T-cell (primary cell): ENCODE measurements at regions of chr6 and their contacts with region 1.

Region 1: GRCh38 chr6:164331026-164331425 is 916.5 kb downstream of the QKI start:
- DNase-seq: no peak
- ATAC-seq: no peak
- H3K4me3 ChIP-seq: no peak overlapping the region
- H3K4me3 Mint-ChIP-seq: no peak overlapping the region
- H3K27ac ChIP-seq: no peak overlapping the region
- H3K27ac Mint-ChIP-seq: no peak overlapping the region
- H3K4me1 ChIP-seq: no peaks in the 10 kb centered on the region
- H3K4me1 Mint-ChIP-seq: no peaks in the 10 kb centered on the region
- H3K27me3 ChIP-seq: no peaks in the 10 kb centered on the region
- H3K27me3 Mint-ChIP-seq: no peaks in the 10 kb centered on the region

Region 2: DNA sequence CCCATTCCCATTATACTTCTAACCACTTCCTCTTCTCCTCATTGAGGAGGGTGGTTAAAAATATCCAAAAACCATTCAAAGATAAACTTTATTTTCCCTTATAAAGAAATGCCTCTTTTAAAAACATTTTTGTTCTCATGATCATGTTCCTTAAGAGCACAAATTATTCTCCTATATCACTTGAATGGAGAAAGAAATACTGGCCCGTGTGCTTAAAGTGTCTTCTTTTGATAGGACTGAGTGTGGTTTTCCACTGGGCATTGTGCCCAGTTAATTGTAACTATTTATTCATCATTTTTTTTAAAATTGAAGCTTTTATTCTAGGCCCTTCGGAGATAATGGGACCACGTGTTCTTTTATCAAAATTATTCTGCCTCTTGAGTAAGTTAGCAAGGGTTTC is 45.0 kb before region 1 on chr6:
- CTCF ChIA-PET with region 1: no interaction called
- POLR2A ChIA-PET with region 1: no interaction called
- DNase-seq: no peak
- ATAC-seq: no peak
- H3K4me3 ChIP-seq: no peak overlapping the region
- H3K4me3 Mint-ChIP-seq: no peak overlapping the region
- H3K27ac ChIP-seq: no peak overlapping the region
- H3K27ac Mint-ChIP-seq: no peak overlapping the region
- H3K4me1 ChIP-seq: no peaks in the 10 kb centered on the region
- H3K4me1 Mint-ChIP-seq: no peaks in the 10 kb centered on the region
- H3K27me3 ChIP-seq: no peaks in the 10 kb centered on the region
- H3K27me3 Mint-ChIP-seq: no peaks in the 10 kb centered on the region

Region 3: GRCh38 chr6:164344801-164345291 is 13.8 kb after region 1 on chr6:
- CTCF ChIA-PET with region 1: no interaction called
- POLR2A ChIA-PET with region 1: no interaction called
- DNase-seq: no peak
- ATAC-seq: no peak
- H3K4me3 ChIP-seq: no peak overlapping the region
- H3K4me3 Mint-ChIP-seq: no peak overlapping the region
- H3K27ac ChIP-seq: no peak overlapping the region
- H3K27ac Mint-ChIP-seq: no peak overlapping the region
- H3K4me1 ChIP-seq: no peaks in the 10 kb centered on the region
- H3K4me1 Mint-ChIP-seq: no peaks in the 10 kb centered on the region
- H3K27me3 ChIP-seq: no peaks in the 10 kb centered on the region
- H3K27me3 Mint-ChIP-seq: no peaks in the 10 kb centered on the region

Region 4: DNA sequence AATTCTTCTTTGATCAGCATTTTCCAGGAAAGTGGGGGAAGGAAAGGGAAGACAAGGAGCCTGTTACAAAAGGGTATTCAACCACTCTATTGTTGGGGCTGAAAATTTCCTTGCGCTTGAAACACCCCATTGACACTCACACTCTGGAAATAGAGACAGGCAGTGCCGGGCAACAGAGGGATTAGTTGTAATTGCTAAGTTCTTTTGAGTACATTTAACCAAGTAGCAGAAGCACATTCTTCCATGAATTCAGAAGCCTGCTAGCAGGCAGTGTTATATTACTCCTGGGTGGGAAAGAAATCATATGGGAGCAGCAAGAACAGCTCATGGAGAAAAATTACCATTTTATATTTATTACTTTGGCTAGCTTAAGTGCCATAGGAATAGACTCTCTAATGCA is 232.9 kb after region 1 on chr6:
- CTCF ChIA-PET with region 1: no interaction called
- POLR2A ChIA-PET with region 1: interaction called in 1 of 2 experiments, 10 read pairs
- DNase-seq: no peak
- ATAC-seq: no peak
- H3K4me3 ChIP-seq: no peak overlapping the region
- H3K4me3 Mint-ChIP-seq: no peak overlapping the region
- H3K27ac ChIP-seq: no peak overlapping the region
- H3K27ac Mint-ChIP-seq: no peak overlapping the region
- H3K4me1 ChIP-seq: no peaks in the 10 kb centered on the region
- H3K4me1 Mint-ChIP-seq: no peaks in the 10 kb centered on the region
- H3K27me3 ChIP-seq: no peaks in the 10 kb centered on the region
- H3K27me3 Mint-ChIP-seq: no peaks in the 10 kb centered on the region

Region 5: DNA sequence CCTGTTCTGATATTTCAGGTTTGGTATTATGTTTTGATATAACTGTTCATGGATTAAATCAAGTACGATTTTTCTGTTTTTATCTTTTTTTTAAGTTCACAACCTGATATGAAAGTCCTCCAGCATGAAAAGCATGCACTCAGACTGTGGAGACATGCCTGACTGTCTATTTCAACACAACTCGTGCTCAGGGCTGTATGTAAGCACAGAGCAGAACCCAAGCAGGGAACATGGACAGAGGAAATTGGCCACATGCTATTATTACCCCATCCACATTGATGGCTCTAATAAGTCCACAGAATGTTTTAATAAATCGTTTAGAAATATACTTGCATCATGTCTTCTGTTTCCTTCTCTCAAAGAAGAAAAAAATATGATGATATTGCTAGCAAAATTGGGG is 248.0 kb after region 1 on chr6:
- CTCF ChIA-PET with region 1: no interaction called
- POLR2A ChIA-PET with region 1: no interaction called
- DNase-seq: no peak
- ATAC-seq: no peak
- H3K4me3 ChIP-seq: no peak overlapping the region
- H3K4me3 Mint-ChIP-seq: no peak overlapping the region
- H3K27ac ChIP-seq: no peak overlapping the region
- H3K27ac Mint-ChIP-seq: no peak overlapping the region
- H3K4me1 ChIP-seq: no peaks in the 10 kb centered on the region
- H3K4me1 Mint-ChIP-seq: no peaks in the 10 kb centered on the region
- H3K27me3 ChIP-seq: no peaks in the 10 kb centered on the region
- H3K27me3 Mint-ChIP-seq: no peaks in the 10 kb centered on the region